Ascending aorta (tissue), 2 donors: ENCODE measurements at regions of chr12 and their contacts with region 1.

Region 1: DNA sequence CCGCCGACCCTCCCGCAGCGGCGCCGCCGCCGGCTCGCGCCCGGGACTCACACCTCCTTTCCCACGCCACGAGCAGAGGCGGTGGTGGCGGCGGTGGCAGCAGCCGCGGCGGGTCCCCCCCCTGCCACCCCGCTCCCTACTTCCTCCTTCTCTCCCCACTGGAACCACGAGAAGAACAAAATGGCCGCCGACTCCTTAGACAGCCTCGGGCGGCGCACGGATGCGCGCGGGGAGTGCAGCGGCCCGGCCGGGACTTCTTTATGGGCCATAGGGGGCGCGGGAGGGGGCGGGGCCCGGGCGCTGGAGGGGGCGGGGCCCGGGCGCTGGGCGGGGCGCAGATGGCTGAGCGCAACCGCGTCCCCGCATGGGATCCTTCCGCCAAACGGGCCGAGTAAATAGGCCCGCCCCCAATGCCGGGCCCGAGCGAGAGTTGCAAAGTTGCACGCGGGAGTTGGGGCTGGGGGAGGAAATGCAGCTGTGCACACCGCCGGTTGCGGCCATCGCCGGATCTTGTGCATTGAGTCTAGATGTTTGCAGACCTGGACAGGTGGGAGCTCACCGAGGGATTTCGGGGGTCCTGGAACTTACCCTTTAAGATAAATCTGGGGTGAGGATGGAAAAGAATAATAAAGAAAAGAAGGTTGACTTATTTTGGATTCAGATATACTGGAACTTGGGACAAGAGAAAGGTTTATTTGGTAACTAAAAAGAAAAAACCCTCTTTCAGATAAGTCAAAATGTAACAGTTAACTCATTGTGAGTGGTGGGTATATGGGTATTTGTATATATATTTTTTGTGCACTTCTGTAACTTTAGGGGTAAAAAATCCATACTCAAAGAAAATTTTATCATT is at the start of gene PPP1CC:
- DNase-seq: peak; percentile 81 to 97
- H3K4me3 ChIP-seq: peak within 1 kb of the TSS; percentile 86 to 97
- H3K27ac ChIP-seq: peak within 1 kb of the TSS; percentile 87 to 90
- H3K4me1 ChIP-seq: peaks cover 0 to 27% of the 10 kb centered on the region in 2 donors
- H3K27me3 ChIP-seq: no peaks in the 10 kb centered on the region
- CTCF ChIP-seq: peak in 1 of 3 experiments; percentile 14
- total RNA-seq, gene PPP1CC: 39.8 TPM

Region 2: GRCh38 chr12:109713187-109713984 is 1029.6 kb before region 1 on chr12 and contains the start of gene FAM222A:
- intact Hi-C with region 1: loop called (anchors 10 kb)
- DNase-seq: peak; percentile 85 to 98
- H3K4me3 ChIP-seq: peak within 1 kb of the TSS; percentile 65 to 94
- H3K27ac ChIP-seq: no peak within 1 kb of the TSS
- H3K4me1 ChIP-seq: peaks cover 0 to 6% of the 10 kb centered on the region in 2 donors
- H3K27me3 ChIP-seq: peaks cover 24% of the 10 kb centered on the region
- CTCF ChIP-seq: peak in 1 of 3 experiments; percentile 18
- total RNA-seq, gene FAM222A: 3.3 TPM

Region 3: DNA sequence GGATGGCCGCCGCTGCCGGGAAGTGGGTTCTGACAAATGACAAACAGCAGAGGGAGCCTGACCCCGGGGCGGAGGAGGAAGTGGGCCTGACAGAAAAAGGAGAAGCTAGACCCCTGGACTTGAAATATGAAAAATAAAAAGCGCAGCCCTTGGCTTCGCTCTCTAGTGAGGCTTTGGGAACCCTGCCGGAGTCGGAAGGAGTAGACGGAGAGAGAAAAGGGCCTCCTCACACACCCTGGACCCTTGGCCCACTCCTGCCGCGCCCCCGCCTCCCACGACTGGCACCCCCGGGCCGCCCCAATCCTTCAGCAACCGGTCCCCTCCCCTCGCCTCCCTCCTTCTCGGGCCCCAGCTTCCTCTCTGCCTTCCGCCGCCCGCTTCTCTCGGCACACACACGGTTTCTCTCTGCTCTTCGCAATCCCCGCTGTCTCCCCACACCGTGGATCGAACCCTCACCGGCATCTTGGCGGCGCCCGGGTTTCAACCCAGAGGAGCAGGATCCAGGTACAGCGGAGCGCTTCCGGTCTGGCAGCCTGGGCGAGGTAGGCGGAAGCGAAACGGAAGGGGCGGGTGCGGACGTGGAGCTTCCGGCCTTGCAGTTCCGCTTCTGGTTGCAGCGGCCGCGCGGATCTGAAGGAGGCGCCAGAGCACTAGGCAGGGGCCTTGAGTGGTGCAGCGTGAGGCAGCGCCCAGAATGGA is 293.0 kb before region 1 on chr12 and contains the start of gene ARPC3:
- intact Hi-C with region 1: loop called (anchors 5 kb)
- DNase-seq: peak; percentile 76 to 98
- H3K4me3 ChIP-seq: peak within 1 kb of the TSS; percentile 92 to 96
- H3K27ac ChIP-seq: peak within 1 kb of the TSS; percentile 92 to 98
- H3K4me1 ChIP-seq: peaks cover 4 to 17% of the 10 kb centered on the region in 2 donors
- H3K27me3 ChIP-seq: no peaks in the 10 kb centered on the region
- CTCF ChIP-seq: peak; percentile 90 to 95 (median 92)
- total RNA-seq, gene ARPC3: 76.5 TPM

Region 4: GRCh38 chr12:110501752-110502738 is 240.9 kb before region 1 on chr12 and contains the starts of genes RAD9B and VPS29:
- intact Hi-C with region 1: loop called (anchors 10 kb)
- DNase-seq: peak; percentile 96 to 99
- H3K4me3 ChIP-seq: peak within 1 kb of the TSS; percentile 75 to 82
- H3K27ac ChIP-seq: peak within 1 kb of the TSS; percentile 92
- H3K4me1 ChIP-seq: peaks cover 7 to 21% of the 10 kb centered on the region in 2 donors
- H3K27me3 ChIP-seq: no peaks in the 10 kb centered on the region
- CTCF ChIP-seq: no peak
- total RNA-seq, gene RAD9B: not detected
- total RNA-seq, gene VPS29: 35.9 TPM

Region 5: GRCh38 chr12:110613771-110614684 is 128.9 kb before region 1 on chr12 and contains the start of gene TCTN1:
- intact Hi-C with region 1: loop called (anchors 10 kb)
- DNase-seq: peak; percentile 92 to 98
- H3K4me3 ChIP-seq: peak within 1 kb of the TSS; percentile 63 to 70
- H3K27ac ChIP-seq: peak within 1 kb of the TSS; percentile 17 to 55
- H3K4me1 ChIP-seq: peaks cover 0 to 4% of the 10 kb centered on the region in 2 donors
- H3K27me3 ChIP-seq: no peaks in the 10 kb centered on the region
- CTCF ChIP-seq: no peak
- total RNA-seq, gene TCTN1: 28.4 TPM

Region 6: DNA sequence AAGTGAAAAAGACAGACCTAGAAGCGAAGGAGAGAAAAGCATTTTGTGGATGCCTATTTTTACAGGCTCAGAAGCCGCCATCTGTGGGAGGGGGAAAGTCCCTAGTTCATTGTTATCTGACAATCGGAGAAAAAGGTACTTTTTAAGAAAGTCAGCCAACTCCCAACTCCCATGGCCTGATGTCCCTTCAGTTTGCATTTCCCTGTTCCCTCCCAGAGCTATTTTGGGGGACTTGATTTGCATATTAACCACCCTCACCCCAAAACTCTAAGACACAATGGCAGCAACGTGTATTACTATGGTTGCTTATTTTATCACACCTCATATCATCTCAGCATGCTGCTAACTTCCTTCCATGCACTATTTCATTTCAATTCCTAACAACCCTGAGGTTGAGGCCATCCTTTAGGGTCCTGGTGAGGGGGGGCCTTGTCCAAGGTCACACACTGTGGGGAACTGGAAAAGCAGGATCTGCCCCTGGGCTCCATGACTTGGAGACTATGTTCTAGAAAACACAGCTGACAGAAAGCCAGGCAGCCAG is 72.7 kb before region 1 on chr12:
- intact Hi-C with region 1: no loop called
- DNase-seq: no peak
- H3K4me3 ChIP-seq: no peak overlapping the region
- H3K27ac ChIP-seq: no peak overlapping the region
- H3K4me1 ChIP-seq: no peaks in the 10 kb centered on the region
- H3K27me3 ChIP-seq: no peaks in the 10 kb centered on the region
- CTCF ChIP-seq: no peak

Region 7: GRCh38 chr12:110829288-110829687 is 86.3 kb after region 1 on chr12:
- intact Hi-C with region 1: no loop called
- DNase-seq: no peak
- H3K4me3 ChIP-seq: no peak overlapping the region
- H3K27ac ChIP-seq: no peak overlapping the region
- H3K4me1 ChIP-seq: no peaks in the 10 kb centered on the region
- H3K27me3 ChIP-seq: no peaks in the 10 kb centered on the region
- CTCF ChIP-seq: no peak

Region 8: DNA sequence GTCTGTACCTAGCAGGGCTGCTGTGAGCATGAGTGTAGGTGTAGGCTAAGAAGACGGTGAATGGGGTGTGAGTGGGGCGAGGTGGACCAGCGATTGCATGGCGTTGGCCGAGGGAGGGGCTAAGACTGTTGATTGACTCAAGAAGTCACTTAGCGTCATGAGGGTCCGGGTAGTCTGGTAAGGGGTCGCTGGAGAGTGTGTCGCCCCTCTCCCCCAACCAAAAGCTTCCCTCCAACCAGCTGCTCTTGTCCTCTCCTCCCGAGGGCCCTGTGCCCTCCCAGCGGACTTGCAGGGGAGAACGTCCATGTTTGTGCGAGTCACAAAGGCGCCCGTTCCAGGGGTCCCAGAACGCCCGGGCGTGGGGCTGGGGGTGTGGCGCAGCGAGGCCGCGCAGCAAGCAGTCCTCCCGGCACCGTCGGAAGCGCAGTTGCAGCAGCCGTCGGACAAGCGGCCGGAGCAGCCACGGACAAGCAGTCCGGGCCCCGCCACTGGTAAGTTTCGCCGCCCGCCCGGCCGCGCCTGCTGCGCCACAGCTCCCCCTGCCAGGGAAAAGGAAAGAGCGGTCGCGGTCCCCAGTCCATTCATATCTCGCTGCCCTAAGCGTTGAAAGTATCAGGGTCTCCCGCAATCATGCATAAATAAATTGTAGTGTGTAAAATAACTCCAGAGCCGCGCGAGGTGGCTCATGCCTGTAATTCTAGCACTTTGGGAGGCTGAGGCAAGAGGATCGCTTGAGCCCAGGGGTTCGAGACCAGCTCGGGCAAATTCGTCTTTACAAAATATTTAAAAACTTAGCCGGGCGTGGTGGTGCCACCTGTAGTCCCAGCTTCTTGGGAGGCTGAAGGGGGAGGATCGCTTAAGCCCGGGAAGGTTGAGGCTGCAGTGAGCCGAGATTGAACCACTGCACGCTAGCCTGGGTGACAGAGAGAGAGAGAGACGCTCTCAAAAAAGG is 103.9 kb after region 1 on chr12 and contains the start of gene CCDC63:
- intact Hi-C with region 1: loop called (anchors 2 kb)
- DNase-seq: peak in 1 of 2 donors; percentile 75
- H3K4me3 ChIP-seq: peak within 1 kb of the TSS; percentile 49 to 59
- H3K27ac ChIP-seq: no peak within 1 kb of the TSS
- H3K4me1 ChIP-seq: peaks cover 0 to 6% of the 10 kb centered on the region in 2 donors
- H3K27me3 ChIP-seq: no peaks in the 10 kb centered on the region
- CTCF ChIP-seq: peak; percentile 31 to 78 (median 45)
- total RNA-seq, gene CCDC63: not detected